ENCODE measurements at regions of chr20 and their contacts with region 1.

Region 1: GRCh38 chr20:35619196-35620095 is 3.8 kb downstream of the SPAG4 start:
- DNase-seq: peak; percentile 98 to 99
- H3K4me3 ChIP-seq: peak overlapping the region; percentile 66
- H3K4me3 Mint-ChIP-seq: peak overlapping the region; percentile 98
- H3K27ac Mint-ChIP-seq: peak overlapping the region; percentile 73
- H3K4me1 ChIP-seq: peaks cover 5% of the 10 kb centered on the region; the same call in 1 of the 2 replicates
- H3K4me1 Mint-ChIP-seq: peaks cover 29% of the 10 kb centered on the region
- H3K27me3 ChIP-seq: no peaks in the 10 kb centered on the region
- H3K27me3 Mint-ChIP-seq: no peaks in the 10 kb centered on the region
- CTCF ChIP-seq: peak; percentile 94 to 99

Region 2: GRCh38 chr20:35454881-35455609 is 164.4 kb before region 1 on chr20 and contains the start of gene CEP250:
- CTCF ChIA-PET with region 1: interaction called, 10 read pairs
- POLR2A ChIA-PET with region 1: interaction called, 21 read pairs
- intact Hi-C with region 1: loop called (anchors 1 kb)
- DNase-seq: peak; percentile 100
- H3K4me3 ChIP-seq: peak within 1 kb of the TSS; percentile 50
- H3K4me3 Mint-ChIP-seq: peak within 1 kb of the TSS; percentile 93
- H3K27ac Mint-ChIP-seq: peak within 1 kb of the TSS; percentile 100
- H3K4me1 ChIP-seq: peaks cover 5% of the 10 kb centered on the region
- H3K4me1 Mint-ChIP-seq: peaks cover 29% of the 10 kb centered on the region
- H3K27me3 ChIP-seq: no peaks in the 10 kb centered on the region
- H3K27me3 Mint-ChIP-seq: no peaks in the 10 kb centered on the region
- CTCF ChIP-seq: no peak
- total RNA-seq, gene CEP250: 117 and 137 TPM in 2 replicates

Region 3: GRCh38 chr20:35561268-35561667 is 58.2 kb before region 1 on chr20:
- CTCF ChIA-PET with region 1: interaction called, 4 read pairs
- POLR2A ChIA-PET with region 1: no interaction called
- intact Hi-C with region 1: loop called (anchors 1 kb)
- DNase-seq: peak; percentile 75 to 79
- H3K4me3 ChIP-seq: no peak overlapping the region
- H3K4me3 Mint-ChIP-seq: no peak overlapping the region
- H3K27ac Mint-ChIP-seq: no peak overlapping the region
- H3K4me1 ChIP-seq: no peaks in the 10 kb centered on the region
- H3K4me1 Mint-ChIP-seq: peaks cover 4% of the 10 kb centered on the region
- H3K27me3 ChIP-seq: no peaks in the 10 kb centered on the region
- H3K27me3 Mint-ChIP-seq: no peaks in the 10 kb centered on the region
- CTCF ChIP-seq: peak; percentile 51 to 86

Region 4: DNA sequence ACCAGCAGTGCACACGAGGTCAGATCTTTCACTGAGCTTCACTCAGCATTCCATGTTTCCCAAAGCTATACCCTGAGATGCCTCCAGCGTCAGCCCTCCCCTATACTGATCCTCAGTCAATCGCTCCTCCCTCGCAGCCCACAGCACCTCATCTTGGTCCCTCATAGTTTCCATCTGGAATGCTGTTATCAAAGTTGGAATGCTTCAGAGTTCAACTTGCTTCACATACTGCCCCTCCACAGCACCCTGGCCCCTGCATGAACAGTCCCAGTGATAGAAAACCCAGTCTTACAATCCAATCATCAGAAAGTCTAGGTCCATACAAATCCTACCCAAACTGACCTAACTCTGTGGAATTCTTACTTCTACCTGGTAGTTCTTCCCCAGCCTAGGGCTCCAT is 16.2 kb after region 1 on chr20:
- CTCF ChIA-PET with region 1: interaction called, 17 read pairs
- POLR2A ChIA-PET with region 1: interaction called, 5 read pairs
- intact Hi-C with region 1: loop called (anchors 2 kb)
- DNase-seq: peak; percentile 60 to 67
- H3K4me3 ChIP-seq: no peak overlapping the region
- H3K4me3 Mint-ChIP-seq: no peak overlapping the region
- H3K27ac Mint-ChIP-seq: peak overlapping the region; percentile 41
- H3K4me1 ChIP-seq: peaks cover 24% of the 10 kb centered on the region
- H3K4me1 Mint-ChIP-seq: peaks cover 47% of the 10 kb centered on the region
- H3K27me3 ChIP-seq: no peaks in the 10 kb centered on the region
- H3K27me3 Mint-ChIP-seq: no peaks in the 10 kb centered on the region
- CTCF ChIP-seq: no peak

Region 5: GRCh38 chr20:35741892-35742740 is 122.7 kb after region 1 on chr20 and contains the start of gene RBM39:
- CTCF ChIA-PET with region 1: interaction called, 10 read pairs
- POLR2A ChIA-PET with region 1: interaction called, 38 read pairs
- intact Hi-C with region 1: loop called (anchors 1 kb)
- DNase-seq: peak; percentile 100
- H3K4me3 ChIP-seq: peak within 1 kb of the TSS; percentile 77
- H3K4me3 Mint-ChIP-seq: peak within 1 kb of the TSS; percentile 80
- H3K27ac Mint-ChIP-seq: peak within 1 kb of the TSS; percentile 96
- H3K4me1 ChIP-seq: peaks cover 31% of the 10 kb centered on the region
- H3K4me1 Mint-ChIP-seq: peaks cover 34% of the 10 kb centered on the region
- H3K27me3 ChIP-seq: no peaks in the 10 kb centered on the region
- H3K27me3 Mint-ChIP-seq: no peaks in the 10 kb centered on the region
- CTCF ChIP-seq: peak; percentile 52 to 65
- total RNA-seq, gene RBM39: 750 and 777 TPM in 2 replicates

Region 6: GRCh38 chr20:35954200-35954906 is 334.9 kb after region 1 on chr20 and contains the start of gene SCAND1:
- CTCF ChIA-PET with region 1: interaction called, 24 read pairs
- POLR2A ChIA-PET with region 1: interaction called, 34 read pairs
- intact Hi-C with region 1: loop called (anchors 2 kb)
- DNase-seq: peak; percentile 100
- H3K4me3 ChIP-seq: peak within 1 kb of the TSS; percentile 86
- H3K4me3 Mint-ChIP-seq: peak within 1 kb of the TSS; percentile 88
- H3K27ac Mint-ChIP-seq: peak within 1 kb of the TSS; percentile 96
- H3K4me1 ChIP-seq: peaks cover 22% of the 10 kb centered on the region
- H3K4me1 Mint-ChIP-seq: peaks cover 9% of the 10 kb centered on the region
- H3K27me3 ChIP-seq: no peaks in the 10 kb centered on the region
- H3K27me3 Mint-ChIP-seq: no peaks in the 10 kb centered on the region
- CTCF ChIP-seq: peak; percentile 99 to 100
- total RNA-seq, gene SCAND1: 125 and 129 TPM in 2 replicates

Measured in Caco-2 (cell line).